ENCODE measurements at regions of chr16 and their contacts with region 1.

Region 1: DNA sequence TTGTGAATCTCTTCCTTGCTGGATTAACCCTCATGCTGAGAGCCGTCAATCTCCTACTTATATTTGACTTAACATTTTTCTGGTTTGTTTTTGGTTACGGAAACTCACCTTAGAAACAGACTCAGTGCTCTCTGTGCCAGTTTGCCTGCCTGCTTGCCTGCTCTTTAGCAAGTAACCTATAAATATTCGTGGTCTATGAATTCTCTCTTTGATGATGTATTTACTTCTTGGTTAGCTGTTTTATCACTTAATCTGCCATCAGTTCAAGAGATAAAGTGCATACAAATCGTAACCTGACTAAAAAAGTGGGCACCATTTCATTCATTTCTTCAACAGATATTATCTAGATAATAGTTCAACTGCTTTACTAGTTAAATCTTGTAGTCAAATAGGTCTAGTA is 26.7 kb downstream of the CYB5B start:
- DNase-seq: no peak
- ATAC-seq: no peak
- H3K4me3 ChIP-seq: no peak overlapping the region
- H3K4me3 Mint-ChIP-seq: no peak overlapping the region
- H3K27ac ChIP-seq: no peak overlapping the region
- H3K27ac Mint-ChIP-seq: peak overlapping the region in 1 of 2 donors; percentile 47
- H3K4me1 ChIP-seq: no peaks in the 10 kb centered on the region
- H3K4me1 Mint-ChIP-seq: peaks cover 18 to 36% (median 22%) of the 10 kb centered on the region in 3 donors
- H3K27me3 ChIP-seq: no peaks in the 10 kb centered on the region
- H3K27me3 Mint-ChIP-seq: no peaks in the 10 kb centered on the region

Region 2: DNA sequence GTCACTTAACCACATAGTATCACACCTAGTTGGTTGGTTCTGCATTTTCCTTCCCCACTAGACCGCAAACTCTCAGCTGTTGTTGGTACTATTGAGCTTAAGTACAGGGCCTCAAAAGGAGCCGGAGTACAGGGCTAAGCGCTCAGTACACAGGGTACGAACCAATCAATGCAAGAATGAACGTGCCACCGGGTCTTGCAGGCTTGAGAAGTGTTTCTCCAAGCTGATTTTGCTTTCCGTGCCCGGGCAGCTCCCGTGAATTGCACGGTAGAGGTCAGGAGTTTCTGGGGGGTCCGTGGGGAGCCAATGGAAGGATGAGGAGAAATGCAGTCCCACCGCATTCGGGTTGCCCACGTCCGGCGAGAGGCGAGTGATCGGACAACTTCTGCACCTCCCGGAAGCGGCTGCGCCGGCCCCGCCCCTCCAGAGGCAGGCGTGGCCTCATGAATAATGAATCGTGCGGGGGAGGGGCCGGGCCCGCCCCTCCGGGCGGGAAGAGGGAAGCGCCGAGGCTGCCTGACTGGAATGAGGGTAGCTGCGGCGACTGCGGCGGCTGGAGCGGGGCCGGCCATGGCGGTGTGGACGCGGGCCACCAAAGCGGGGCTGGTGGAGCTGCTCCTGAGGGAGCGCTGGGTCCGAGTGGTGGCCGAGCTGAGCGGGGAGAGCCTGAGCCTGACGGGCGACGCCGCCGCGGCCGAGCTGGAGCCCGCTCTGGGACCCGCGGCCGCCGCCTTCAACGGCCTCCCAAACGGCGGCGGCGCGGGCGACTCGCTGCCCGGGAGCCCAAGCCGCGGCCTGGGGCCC is 264.3 kb before region 1 on chr16 and contains the start of gene SNTB2:
- CTCF ChIA-PET with region 1: no interaction called
- POLR2A ChIA-PET with region 1: interaction called in 1 of 2 experiments, 12 read pairs
- DNase-seq: peak; percentile 59 to 86 (median 74)
- ATAC-seq: peak; percentile 81 to 88 (median 83)
- H3K4me3 ChIP-seq: peak within 1 kb of the TSS; percentile 73 to 78
- H3K4me3 Mint-ChIP-seq: peak within 1 kb of the TSS; percentile 99 to 100 (median 99)
- H3K27ac ChIP-seq: peak within 1 kb of the TSS; percentile 69
- H3K27ac Mint-ChIP-seq: peak within 1 kb of the TSS; percentile 99
- H3K4me1 ChIP-seq: peaks cover 13 to 50% of the 10 kb centered on the region in 2 experiments
- H3K4me1 Mint-ChIP-seq: peaks cover 43 to 52% (median 47%) of the 10 kb centered on the region in 3 donors
- H3K27me3 ChIP-seq: no peaks in the 10 kb centered on the region
- H3K27me3 Mint-ChIP-seq: no peaks in the 10 kb centered on the region
- total RNA-seq, gene SNTB2: 13.2 to 23.1 (median 17.3) TPM

Region 3: DNA sequence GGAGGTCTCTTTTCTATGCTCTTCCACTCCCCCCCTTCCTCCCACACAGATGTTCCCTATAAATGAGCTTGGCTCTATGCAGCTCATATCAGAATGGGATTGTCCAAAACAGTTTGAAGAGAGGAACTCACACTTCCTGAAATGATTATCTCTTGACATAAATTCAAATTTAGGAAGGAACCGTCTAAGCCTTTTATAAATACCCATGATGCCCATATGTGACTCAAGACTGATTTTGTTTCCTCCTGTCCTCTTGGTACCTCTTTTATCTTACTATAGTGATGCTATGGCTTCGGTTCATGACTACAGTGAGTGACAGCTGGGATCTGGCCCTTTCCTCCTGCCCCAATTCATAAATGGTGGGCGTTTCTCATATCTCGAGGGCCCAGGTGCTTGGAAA is 48.7 kb before region 1 on chr16:
- CTCF ChIA-PET with region 1: no interaction called
- POLR2A ChIA-PET with region 1: no interaction called
- DNase-seq: no peak
- ATAC-seq: no peak
- H3K4me3 ChIP-seq: no peak overlapping the region
- H3K4me3 Mint-ChIP-seq: no peak overlapping the region
- H3K27ac ChIP-seq: no peak overlapping the region
- H3K27ac Mint-ChIP-seq: no peak overlapping the region
- H3K4me1 ChIP-seq: no peaks in the 10 kb centered on the region
- H3K4me1 Mint-ChIP-seq: no peaks in the 10 kb centered on the region
- H3K27me3 ChIP-seq: peaks cover 0 to 2% of the 10 kb centered on the region in 2 experiments
- H3K27me3 Mint-ChIP-seq: no peaks in the 10 kb centered on the region

Region 4: DNA sequence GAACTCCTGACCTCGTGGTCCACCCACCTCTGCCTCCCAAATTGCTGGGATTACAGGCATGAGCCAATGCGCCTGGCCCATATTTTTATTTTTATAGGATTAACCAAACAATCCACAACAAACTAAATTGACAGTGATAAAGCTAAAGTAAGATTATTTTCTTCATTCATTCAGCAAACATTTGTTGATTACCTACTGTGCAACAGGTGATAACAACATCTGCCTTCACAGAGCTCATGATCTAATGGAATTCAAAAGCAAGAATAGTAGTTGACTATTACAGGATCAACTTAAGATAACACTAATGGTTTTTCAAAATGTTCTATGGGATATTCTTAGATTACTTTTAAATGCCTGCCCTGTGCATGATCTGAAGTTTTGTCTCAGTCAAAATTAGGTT is 237.4 kb after region 1 on chr16:
- CTCF ChIA-PET with region 1: no interaction called
- POLR2A ChIA-PET with region 1: no interaction called
- DNase-seq: no peak
- ATAC-seq: no peak
- H3K4me3 ChIP-seq: no peak overlapping the region
- H3K4me3 Mint-ChIP-seq: no peak overlapping the region
- H3K27ac ChIP-seq: no peak overlapping the region
- H3K27ac Mint-ChIP-seq: peak overlapping the region in 1 of 2 donors; percentile 28
- H3K4me1 ChIP-seq: no peaks in the 10 kb centered on the region
- H3K4me1 Mint-ChIP-seq: no peaks in the 10 kb centered on the region
- H3K27me3 ChIP-seq: no peaks in the 10 kb centered on the region
- H3K27me3 Mint-ChIP-seq: no peaks in the 10 kb centered on the region

Measured in T-cell (primary cell).